ENCODE measurements at regions of chr6 and their contacts with region 1.

Region 1: DNA sequence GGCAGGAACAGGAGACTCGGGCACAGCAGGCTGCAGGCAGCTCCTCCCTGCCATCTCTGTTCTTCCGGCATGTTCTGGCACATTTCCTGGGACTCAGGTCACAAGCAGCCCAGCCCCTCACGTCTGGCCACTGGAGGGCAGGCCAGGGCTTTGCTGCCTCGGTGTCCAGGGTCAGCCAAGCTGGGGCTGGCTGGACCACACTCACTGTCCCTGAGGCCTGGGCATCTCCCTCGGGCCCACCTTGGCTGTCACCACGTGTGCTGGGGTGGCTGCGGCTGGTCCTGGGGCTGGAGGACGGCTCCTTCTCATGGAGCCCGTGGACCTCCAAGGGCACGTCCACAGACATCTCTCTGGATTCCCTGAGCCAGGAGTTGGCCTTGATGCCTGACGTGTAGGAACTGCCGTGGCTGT is 18.5 kb downstream of the FRMD1 start:
- DNase-seq: peak; percentile 86
- H3K4me3 ChIP-seq: no peak overlapping the region
- H3K27ac ChIP-seq: no peak overlapping the region
- H3K4me1 ChIP-seq: no peaks in the 10 kb centered on the region
- H3K27me3 ChIP-seq: no peaks in the 10 kb centered on the region
- CTCF ChIP-seq: peak; percentile 60

Region 2: DNA sequence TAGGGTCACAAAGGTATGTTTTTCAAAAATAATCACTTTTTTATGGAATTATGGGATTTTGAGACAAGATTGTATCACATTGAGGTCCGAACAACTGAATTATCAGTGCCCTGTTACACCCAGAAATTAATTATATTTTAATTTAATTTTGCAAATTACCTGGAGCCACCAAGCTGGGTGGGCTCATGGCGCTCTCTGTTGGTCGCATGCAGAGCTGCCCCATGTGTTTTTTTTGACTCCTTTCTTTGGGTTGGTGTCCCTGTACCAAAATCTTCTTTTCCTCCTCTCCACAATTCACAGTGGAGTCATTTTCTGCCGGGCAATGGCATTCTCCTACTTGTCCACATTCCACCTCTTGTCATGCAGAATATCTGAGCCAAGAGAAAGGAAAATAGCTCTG is 57.4 kb after region 1 on chr6:
- intact Hi-C with region 1: loop called (anchors 5 kb)
- DNase-seq: no peak
- H3K4me3 ChIP-seq: no peak overlapping the region
- H3K27ac ChIP-seq: no peak overlapping the region
- H3K4me1 ChIP-seq: no peaks in the 10 kb centered on the region
- H3K27me3 ChIP-seq: no peaks in the 10 kb centered on the region
- CTCF ChIP-seq: no peak

Region 3: DNA sequence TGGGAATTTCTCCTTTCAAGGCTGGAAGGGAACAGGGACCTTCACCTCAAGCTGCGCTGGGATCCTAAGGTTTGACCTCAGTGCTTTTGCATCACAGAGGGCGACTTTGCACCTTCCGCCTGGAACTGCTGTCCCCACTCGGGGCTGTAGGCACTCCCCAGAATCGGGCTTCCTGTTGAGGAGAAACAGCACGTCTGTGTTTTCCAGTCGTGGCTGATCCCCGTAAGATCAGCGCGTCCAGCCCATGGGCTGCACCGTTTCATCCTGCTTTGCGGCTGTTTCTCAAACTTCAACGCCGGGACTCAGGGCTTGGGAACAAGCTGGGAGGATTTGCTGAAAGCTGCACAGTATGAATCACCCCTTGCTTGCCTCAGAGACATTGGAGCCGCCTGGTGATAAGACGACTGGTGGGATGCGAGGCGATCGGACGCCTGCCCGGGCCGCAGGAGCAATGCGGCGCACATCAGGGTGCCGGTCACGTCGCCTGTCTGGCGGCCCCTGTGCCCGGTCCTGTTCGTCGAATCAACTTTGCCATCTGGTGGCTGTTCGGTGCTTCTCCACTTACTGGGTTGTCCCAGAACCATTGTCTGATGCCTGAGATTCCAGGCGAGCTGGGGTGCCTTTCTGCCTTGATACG is 72.1 kb after region 1 on chr6:
- intact Hi-C with region 1: loop called (anchors 5 kb)
- DNase-seq: peak; percentile 22
- H3K4me3 ChIP-seq: no peak overlapping the region
- H3K27ac ChIP-seq: no peak overlapping the region
- H3K4me1 ChIP-seq: no peaks in the 10 kb centered on the region
- H3K27me3 ChIP-seq: no peaks in the 10 kb centered on the region
- CTCF ChIP-seq: peak; percentile 12